OCI-LY7 (cell line): ENCODE measurements at regions of chr14 and their contacts with region 1.

Region 1: DNA sequence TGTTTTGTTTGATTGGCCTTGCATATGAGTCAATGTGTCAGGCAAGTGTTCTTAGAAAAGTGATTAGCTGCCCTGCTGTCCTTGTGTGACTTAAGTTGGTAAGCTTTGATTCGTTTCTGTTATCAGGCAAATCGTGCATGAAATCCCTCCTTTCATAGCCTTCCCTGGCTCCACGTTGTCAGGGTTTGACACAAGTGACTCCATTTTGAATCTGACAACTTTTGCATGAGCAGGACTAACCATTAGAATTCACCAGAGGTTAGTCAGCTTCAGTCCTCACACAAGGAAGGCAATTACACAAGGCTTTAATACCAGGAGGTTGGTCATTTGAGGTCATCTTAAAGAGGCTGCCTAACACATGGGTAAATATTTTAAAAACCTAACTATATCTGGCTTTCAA is 68.2 kb downstream of the GPATCH2L start:
- DNase-seq: no peak
- H3K4me3 ChIP-seq: no peak overlapping the region
- H3K27ac ChIP-seq: no peak overlapping the region
- H3K4me1 ChIP-seq: no peaks in the 10 kb centered on the region
- CTCF ChIP-seq: no peak

Region 2: GRCh38 chr14:76168531-76168930 is 51.3 kb before region 1 on chr14:
- CTCF ChIA-PET with region 1: no interaction called
- POLR2A ChIA-PET with region 1: no interaction called
- intact Hi-C with region 1: no loop called
- DNase-seq: no peak
- H3K4me3 ChIP-seq: no peak overlapping the region
- H3K27ac ChIP-seq: no peak overlapping the region
- H3K4me1 ChIP-seq: no peaks in the 10 kb centered on the region
- CTCF ChIP-seq: no peak

Region 3: DNA sequence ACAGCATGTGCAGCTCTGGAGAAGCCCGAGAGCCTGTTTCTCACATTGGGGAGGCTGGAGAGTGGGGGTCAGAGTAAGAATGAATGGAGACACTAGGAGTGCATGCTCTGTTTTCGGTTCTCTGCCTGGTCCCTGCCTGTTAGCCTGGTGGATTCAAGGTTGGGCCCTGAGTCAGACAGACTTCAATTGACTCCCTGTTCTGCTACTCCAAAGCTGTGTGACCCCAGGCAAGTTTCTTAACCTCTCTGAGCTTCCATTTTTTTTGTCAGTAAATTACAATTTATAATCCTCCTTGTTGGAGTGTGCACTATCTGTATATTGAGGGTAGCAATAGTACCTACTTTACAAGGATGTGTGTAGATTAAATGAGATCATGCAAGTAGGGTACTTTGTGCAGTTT is 53.5 kb after region 1 on chr14:
- CTCF ChIA-PET with region 1: no interaction called
- POLR2A ChIA-PET with region 1: interaction called, 4 read pairs
- intact Hi-C with region 1: loop called (anchors 2 kb)
- DNase-seq: no peak
- H3K4me3 ChIP-seq: no peak overlapping the region
- H3K27ac ChIP-seq: no peak overlapping the region
- H3K4me1 ChIP-seq: no peaks in the 10 kb centered on the region
- CTCF ChIP-seq: no peak

Region 4: DNA sequence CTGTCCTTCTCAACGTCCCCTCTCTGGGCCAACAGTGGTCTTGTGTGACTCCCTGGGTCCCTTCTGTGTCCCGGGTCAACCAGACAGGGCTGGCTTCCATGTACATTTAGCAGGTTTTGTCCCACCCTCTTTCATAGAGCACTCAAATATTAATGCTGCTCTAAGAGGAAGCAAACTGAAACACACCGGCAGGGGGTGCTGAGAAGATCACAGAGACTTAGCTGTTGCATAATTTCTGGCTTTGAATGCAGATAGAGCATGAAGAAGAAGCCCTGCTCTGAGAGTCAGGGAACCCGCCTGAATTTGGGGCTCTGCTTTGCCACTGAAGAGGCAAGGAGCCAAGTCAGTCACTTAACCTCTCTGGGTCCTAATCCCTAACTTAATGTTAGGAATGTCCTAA is 294.7 kb after region 1 on chr14:
- CTCF ChIA-PET with region 1: no interaction called
- POLR2A ChIA-PET with region 1: no interaction called
- intact Hi-C with region 1: no loop called
- DNase-seq: peak; percentile 3
- H3K4me3 ChIP-seq: no peak overlapping the region
- H3K27ac ChIP-seq: no peak overlapping the region
- H3K4me1 ChIP-seq: no peaks in the 10 kb centered on the region
- CTCF ChIP-seq: peak; percentile 47

Region 5: GRCh38 chr14:76654573-76655090 is 434.8 kb after region 1 on chr14:
- CTCF ChIA-PET with region 1: no interaction called
- POLR2A ChIA-PET with region 1: no interaction called
- intact Hi-C with region 1: no loop called
- DNase-seq: no peak
- H3K4me3 ChIP-seq: no peak overlapping the region
- H3K27ac ChIP-seq: no peak overlapping the region
- H3K4me1 ChIP-seq: no peaks in the 10 kb centered on the region
- CTCF ChIP-seq: no peak